PC-9 (cell line): ENCODE measurements at regions of chr20 and their contacts with region 1.

Region 1: DNA sequence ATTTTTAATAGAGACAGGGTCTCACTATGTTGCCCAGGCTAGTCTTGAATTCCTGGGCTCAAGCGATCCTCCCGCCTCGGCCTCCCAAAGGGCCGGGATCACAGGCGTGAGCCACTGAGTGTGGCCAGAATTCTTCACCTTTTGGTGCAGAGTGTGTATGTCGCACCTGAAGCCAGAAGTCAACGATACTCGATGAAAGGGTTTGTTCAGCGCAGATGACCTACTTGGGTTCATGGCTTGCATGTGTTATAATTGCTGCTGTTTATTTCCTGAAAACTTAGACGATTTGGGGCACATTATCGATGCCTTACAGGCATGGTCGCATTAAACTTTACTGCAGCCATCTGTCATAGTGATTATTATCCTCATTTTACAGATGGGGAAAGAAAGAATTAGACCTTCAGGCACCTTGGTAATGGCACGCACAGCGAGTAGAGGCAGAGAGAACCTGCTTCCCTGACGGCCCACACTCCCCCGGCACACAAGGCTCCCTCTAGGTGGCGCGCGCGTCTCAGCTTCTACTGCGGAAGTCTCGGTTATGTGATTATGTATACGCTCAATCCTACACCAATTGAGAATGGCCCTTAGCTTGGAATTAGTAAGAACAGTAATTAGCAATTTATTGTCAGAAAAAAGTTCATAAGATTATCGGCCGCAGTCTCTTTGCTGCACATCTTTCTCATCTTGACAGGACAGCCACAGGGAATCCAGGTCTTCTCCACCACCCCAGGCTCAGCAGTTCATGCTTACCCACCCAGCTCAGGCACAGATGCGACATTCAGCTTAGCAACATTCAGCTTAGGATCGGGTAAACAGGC is 212.8 kb upstream of the PROKR2 start:
- DNase-seq: peak; percentile 52 to 81
- H3K4me3 ChIP-seq: no peak overlapping the region
- H3K27ac ChIP-seq: no peak overlapping the region
- H3K4me1 ChIP-seq: no peaks in the 10 kb centered on the region
- H3K27me3 ChIP-seq: peaks cover 10% of the 10 kb centered on the region; the same call in 1 of the 2 replicates
- CTCF ChIP-seq: peak; percentile 76

Region 2: DNA sequence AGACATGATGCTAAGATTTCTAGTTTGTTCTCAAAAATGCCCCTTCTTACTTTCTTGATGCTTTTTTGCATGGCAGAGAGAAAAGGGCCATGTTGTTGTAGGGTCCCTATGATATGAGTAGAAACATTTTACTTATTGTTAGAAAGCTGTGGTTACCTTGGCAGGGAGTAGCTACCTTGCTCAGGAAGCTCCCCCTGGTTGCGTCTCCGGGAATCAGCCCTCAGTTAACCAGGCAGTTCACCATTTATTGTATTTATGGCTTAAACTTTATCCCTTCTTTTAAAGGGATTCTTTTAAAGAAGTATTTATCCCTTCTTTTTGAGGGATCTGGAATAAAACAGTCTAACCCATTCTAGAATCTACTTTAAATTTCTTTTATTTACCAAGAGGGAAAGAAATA is 98.9 kb before region 1 on chr20:
- CTCF ChIA-PET with region 1: no interaction called
- POLR2A ChIA-PET with region 1: no interaction called
- intact Hi-C with region 1: no loop called
- DNase-seq: no peak
- H3K4me3 ChIP-seq: no peak overlapping the region
- H3K27ac ChIP-seq: no peak overlapping the region
- H3K4me1 ChIP-seq: no peaks in the 10 kb centered on the region
- H3K27me3 ChIP-seq: peaks cover 75% of the 10 kb centered on the region
- CTCF ChIP-seq: no peak; the same call in 1 of the 2 replicates

Region 3: DNA sequence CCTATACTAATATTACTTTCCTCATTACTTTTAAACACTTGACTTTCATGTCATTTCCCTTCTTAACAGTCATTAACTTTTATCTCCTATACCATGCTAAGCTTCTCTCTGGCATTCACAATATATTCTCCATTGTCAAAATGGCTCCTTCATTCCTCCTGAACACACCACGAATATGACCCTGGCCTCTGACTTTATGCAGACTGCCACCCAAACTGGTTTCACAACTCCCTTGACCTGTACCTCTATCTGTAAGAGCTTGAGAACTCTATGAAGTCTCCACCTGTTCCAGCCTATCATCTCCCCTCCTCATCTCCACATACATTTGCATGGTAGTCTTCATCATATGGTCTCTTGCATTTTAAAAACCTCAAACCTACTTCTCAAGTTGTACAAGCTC is 13.8 kb after region 1 on chr20:
- CTCF ChIA-PET with region 1: no interaction called
- POLR2A ChIA-PET with region 1: no interaction called
- intact Hi-C with region 1: no loop called
- DNase-seq: no peak
- H3K4me3 ChIP-seq: no peak overlapping the region
- H3K27ac ChIP-seq: no peak overlapping the region
- H3K4me1 ChIP-seq: no peaks in the 10 kb centered on the region
- H3K27me3 ChIP-seq: no peaks in the 10 kb centered on the region
- CTCF ChIP-seq: no peak

Region 4: DNA sequence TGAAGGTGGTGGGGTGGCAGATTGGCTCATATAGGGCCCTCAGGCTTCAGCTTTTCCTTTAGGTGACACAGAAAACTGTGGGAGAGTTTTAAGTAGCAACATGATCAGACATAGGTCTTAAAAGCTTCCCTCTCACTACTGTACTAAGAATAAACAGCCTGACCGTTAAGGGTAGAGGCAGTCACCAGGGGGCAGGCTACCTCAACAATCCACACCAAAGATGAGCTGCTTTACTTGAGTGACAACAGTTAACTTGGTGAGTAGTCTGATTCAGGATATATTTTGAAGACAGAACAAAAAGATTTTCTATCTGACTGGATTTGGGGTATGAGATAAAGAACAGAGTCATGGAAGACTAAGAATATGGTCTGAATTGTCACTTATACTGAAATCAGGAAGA is 27.6 kb after region 1 on chr20:
- CTCF ChIA-PET with region 1: interaction called, 8 read pairs
- POLR2A ChIA-PET with region 1: no interaction called
- intact Hi-C with region 1: loop called (anchors 2 kb)
- DNase-seq: peak; percentile 42 to 48
- H3K4me3 ChIP-seq: no peak overlapping the region
- H3K27ac ChIP-seq: no peak overlapping the region
- H3K4me1 ChIP-seq: no peaks in the 10 kb centered on the region
- H3K27me3 ChIP-seq: no peaks in the 10 kb centered on the region
- CTCF ChIP-seq: peak; percentile 78

Region 5: DNA sequence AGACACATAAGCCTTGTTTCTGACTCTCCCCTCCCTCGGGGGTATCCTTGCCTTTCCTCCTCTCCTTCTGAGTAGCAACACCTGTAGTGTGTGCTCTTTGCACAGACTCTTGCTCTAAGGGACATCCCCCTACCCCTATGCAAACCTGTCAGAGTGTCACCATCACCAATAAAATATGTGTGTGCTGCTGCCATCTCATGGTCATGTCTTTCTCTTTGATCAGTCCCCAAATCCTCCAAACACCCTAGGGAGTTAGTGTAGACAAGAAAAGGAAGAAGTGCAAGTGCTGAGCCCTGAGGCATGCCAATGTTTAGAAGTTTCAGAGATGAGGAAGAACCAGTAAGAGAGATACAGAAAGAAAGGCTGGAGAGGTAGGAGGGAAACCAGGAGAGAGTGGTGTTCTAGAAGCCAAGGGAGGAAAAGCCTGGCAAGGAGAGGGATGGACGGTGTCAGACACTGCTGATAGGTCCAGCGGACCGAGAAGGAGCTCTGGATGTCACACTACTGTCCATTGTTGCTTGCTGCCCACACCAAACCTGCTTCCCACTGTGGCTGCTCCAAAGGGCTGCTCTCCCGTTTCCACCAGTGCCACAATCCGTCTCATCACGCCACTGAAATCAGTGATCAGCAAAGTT is 404.4 kb after region 1 on chr20:
- CTCF ChIA-PET with region 1: no interaction called
- POLR2A ChIA-PET with region 1: no interaction called
- intact Hi-C with region 1: loop called (anchors 1 kb)
- DNase-seq: no peak
- H3K4me3 ChIP-seq: no peak overlapping the region
- H3K27ac ChIP-seq: no peak overlapping the region
- H3K4me1 ChIP-seq: no peaks in the 10 kb centered on the region
- H3K27me3 ChIP-seq: peaks cover 19% of the 10 kb centered on the region; the same call in 1 of the 2 replicates
- CTCF ChIP-seq: peak; percentile 55

Region 6: DNA sequence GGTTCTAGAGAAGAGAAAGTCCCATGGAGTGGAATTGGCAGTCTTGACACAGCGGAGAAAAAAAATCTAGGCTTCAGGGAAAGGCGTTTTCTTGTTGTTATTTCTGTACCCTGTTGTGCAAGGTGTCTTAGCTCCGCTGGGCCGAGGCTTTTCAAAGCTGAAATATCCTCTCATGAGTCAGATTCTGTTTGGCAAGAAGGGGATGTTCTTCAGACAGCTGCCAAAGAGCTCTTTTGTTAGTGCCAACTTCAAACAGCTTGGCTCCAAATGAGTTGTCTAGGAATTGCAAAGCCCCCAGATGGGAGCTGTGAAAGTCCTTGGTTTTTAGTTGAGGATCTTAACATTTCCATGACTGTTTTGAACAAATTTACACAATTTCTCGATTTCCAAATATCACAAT is 478.7 kb after region 1 on chr20:
- CTCF ChIA-PET with region 1: interaction called, 3 read pairs
- POLR2A ChIA-PET with region 1: no interaction called
- intact Hi-C with region 1: loop called (anchors 1 kb)
- DNase-seq: peak; percentile 62 to 94
- H3K4me3 ChIP-seq: peak overlapping the region; percentile 97; the same call in 1 of the 2 replicates
- H3K27ac ChIP-seq: no peak overlapping the region
- H3K4me1 ChIP-seq: peaks cover 29% of the 10 kb centered on the region
- H3K27me3 ChIP-seq: no peaks in the 10 kb centered on the region
- CTCF ChIP-seq: no peak

Region 7: DNA sequence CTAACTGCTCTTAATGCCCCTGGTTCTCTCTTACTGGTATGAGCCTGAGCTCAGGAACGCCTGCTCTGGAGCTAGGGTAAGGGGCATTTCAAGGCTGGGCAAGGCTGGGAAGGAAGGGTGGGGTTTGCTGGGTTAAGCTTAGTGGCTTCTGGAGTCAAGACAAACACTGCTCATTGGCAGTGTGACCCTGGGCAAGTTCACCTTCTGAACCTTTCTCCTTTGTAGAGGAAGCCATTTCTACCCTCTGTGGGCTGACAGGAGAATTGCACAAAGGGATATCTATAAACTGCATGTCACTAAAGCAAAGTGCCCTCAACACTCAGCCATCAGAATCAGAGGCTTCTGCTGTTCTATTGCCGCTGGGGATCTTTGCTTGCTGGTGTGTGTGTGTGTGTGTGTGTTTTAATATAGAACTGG is 544.6 kb after region 1 on chr20:
- CTCF ChIA-PET with region 1: interaction called, 11 read pairs
- POLR2A ChIA-PET with region 1: no interaction called
- intact Hi-C with region 1: loop called (anchors 1 kb)
- DNase-seq: no peak
- H3K4me3 ChIP-seq: no peak overlapping the region
- H3K27ac ChIP-seq: no peak overlapping the region
- H3K4me1 ChIP-seq: no peaks in the 10 kb centered on the region
- H3K27me3 ChIP-seq: no peaks in the 10 kb centered on the region
- CTCF ChIP-seq: peak; percentile 65

Region 8: DNA sequence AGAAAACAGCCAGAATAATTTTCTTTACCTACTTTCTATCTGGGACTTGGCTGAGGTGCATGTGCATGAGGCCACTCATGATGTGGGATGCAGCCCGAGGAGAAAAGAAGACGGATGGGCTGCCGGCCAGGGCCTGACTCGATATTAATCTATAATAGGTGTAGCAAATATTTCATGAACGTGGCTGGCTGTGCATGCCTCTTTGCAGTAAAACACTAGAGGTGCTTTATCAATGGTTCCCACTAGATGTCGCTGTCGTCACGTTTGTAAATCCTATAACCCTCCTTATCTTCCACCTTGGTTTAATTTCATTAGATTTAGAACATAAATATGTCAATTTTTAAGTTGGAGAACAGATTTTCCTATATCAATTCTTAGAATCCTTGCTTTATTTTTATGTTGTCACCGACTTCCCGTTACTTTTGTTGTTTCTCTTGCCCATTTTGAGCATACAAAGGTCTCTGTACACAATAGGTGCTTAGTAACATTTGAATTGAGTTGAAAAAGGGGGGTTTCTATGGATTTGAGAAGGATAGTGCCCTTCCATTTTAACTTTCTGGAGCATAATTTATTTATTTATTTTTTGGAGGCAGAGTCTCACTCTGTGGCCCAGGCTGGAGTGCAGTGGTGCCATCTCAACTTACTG is 612.9 kb after region 1 on chr20:
- CTCF ChIA-PET with region 1: no interaction called
- POLR2A ChIA-PET with region 1: no interaction called
- intact Hi-C with region 1: loop called (anchors 5 kb)
- DNase-seq: peak in 1 of 2 experiments; percentile 33
- H3K4me3 ChIP-seq: no peak overlapping the region
- H3K27ac ChIP-seq: no peak overlapping the region
- H3K4me1 ChIP-seq: no peaks in the 10 kb centered on the region
- H3K27me3 ChIP-seq: no peaks in the 10 kb centered on the region
- CTCF ChIP-seq: peak; percentile 89